A549 (cell line): ENCODE measurements at regions of chr11 and their contacts with region 1.

Region 1: DNA sequence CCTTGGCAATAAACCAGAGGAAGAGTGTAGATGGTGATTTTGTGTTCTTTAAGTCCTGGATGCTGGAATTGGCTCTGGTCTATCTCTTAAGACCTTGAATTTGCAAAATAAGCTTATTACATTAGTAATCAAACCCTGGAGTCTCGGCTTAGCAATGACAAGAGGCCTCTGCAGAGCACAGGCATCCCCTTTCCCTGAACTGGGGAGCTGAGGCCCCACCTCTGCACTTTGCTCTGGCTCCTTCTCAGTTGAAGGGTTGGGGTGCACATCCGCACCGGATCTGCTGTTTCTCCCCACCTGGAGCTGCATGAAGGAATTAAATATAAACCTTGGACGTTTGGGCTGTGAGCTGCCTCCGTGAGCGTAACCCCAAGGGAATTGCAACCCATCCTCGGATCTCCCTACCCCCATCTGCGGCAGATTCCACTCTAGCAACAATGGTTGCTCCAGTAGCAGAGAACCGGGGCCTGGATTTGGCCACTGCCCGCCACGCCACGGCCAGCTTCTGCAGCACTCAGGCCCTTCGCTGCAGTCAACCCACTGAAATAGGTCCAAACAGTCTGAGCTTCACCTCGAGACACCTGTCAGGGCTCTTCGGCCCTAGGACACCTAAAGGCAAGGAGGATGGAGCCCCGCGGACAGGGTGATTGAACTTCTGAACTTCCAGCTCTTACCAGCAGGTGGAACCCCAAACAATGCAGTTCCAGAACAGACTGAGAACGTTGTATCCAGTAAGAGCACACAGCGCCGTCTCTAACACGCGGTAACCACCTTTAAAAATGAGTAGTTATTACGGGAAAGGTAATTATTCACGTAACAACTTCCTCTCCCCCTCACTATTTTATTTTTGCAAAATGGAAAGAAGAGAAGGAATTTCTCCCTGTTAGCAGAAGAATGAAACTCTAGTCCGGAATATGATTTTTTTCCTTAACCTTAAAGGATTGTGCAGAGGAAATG is 54.8 kb upstream of the CAPRIN1 start:
- DNase-seq: peak; percentile 64 to 79
- ATAC-seq: peak; percentile 99 to 100
- H3K4me3 ChIP-seq: peak overlapping the region; percentile 23; the same call in 2 of the 3 replicates
- H3K27ac ChIP-seq: no peak overlapping the region
- H3K4me1 ChIP-seq: peaks cover 14% of the 10 kb centered on the region
- CTCF ChIP-seq: peak; percentile 87
- EP300 ChIP-seq: no peak
- POLR2A ChIP-seq: no peak
- RAD21 ChIP-seq: peak; percentile 82

Region 2: DNA sequence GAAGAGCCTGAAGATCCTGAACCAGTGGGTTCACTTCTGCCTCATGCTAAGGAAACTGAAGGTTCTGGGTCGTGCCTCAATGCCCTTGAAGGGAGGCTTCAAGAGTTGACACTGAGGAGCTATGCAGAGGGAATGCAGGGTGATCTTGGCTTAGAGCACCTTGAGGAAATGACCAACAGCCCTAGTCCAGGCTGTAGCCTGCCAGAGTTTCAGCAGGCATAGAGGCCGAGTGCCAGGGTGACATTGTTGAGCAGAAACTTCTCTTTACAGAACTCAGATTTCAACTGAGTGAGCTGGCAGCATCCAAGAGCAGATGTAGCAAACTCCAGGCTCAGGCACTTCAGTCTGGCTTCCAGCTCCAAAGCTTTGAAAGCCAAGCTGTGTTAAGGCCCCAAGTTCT is 31.6 kb after region 1 on chr11:
- CTCF ChIA-PET with region 1: interaction called, 15 read pairs
- POLR2A ChIA-PET with region 1: no interaction called
- DNase-seq: no peak
- ATAC-seq: peak in 1 of 2 experiments; percentile 48; a peak in 4 of 6 replicates
- H3K4me3 ChIP-seq: no peak overlapping the region
- H3K27ac ChIP-seq: peak overlapping the region in 1 of 2 experiments; percentile 63; a peak in 3 of 6 replicates
- H3K4me1 ChIP-seq: peaks cover 14% of the 10 kb centered on the region
- CTCF ChIP-seq: no peak
- EP300 ChIP-seq: no peak
- POLR2A ChIP-seq: no peak
- RAD21 ChIP-seq: no peak

Region 3: DNA sequence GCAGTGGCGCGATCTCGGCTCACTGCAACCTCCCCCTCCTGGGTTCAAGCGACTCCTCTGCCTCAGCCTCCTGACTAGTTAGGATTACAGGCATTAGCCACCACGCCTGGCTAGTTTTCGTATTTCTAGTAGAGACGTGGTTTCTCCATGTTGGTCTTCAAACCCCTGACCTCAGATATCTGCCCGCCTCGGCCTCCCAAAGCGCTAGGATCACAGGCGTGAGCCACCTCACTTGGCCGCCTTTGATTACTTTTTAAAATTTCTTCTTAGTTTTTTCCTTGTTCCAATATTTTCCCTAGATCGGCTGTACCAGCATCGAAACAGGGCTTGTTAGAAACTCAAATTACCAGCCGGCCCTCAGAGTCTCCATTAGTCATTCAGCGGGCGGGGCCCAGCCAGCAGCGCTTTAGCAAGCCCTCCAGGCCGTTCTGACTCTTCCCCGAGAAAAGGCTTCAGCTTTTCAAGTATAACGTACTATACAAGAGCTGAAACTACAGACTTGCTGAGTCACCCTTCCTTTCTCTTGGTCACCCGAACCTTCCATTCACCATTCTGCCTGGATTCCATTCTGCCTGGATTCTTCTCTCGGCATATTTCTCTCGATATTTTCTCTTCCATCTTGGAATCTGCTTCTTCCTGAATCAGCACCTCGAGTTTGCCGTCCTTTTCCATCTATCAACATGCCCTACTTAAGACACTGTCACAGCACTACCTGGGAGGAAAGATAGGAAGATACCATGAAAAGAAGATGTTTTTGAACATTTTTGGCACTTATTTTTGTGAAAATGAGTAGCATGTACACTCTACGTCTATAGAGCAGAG is 48.1 kb after region 1 on chr11:
- CTCF ChIA-PET with region 1: interaction called, 16 read pairs
- POLR2A ChIA-PET with region 1: no interaction called
- DNase-seq: peak; percentile 51 to 76
- ATAC-seq: peak; percentile 81 to 97
- H3K4me3 ChIP-seq: peak overlapping the region; percentile 7; the same call in 1 of the 3 replicates
- H3K27ac ChIP-seq: peak overlapping the region; percentile 80 to 88
- H3K4me1 ChIP-seq: peaks cover 12% of the 10 kb centered on the region
- CTCF ChIP-seq: no peak
- EP300 ChIP-seq: no peak
- POLR2A ChIP-seq: no peak
- RAD21 ChIP-seq: no peak

Region 4: DNA sequence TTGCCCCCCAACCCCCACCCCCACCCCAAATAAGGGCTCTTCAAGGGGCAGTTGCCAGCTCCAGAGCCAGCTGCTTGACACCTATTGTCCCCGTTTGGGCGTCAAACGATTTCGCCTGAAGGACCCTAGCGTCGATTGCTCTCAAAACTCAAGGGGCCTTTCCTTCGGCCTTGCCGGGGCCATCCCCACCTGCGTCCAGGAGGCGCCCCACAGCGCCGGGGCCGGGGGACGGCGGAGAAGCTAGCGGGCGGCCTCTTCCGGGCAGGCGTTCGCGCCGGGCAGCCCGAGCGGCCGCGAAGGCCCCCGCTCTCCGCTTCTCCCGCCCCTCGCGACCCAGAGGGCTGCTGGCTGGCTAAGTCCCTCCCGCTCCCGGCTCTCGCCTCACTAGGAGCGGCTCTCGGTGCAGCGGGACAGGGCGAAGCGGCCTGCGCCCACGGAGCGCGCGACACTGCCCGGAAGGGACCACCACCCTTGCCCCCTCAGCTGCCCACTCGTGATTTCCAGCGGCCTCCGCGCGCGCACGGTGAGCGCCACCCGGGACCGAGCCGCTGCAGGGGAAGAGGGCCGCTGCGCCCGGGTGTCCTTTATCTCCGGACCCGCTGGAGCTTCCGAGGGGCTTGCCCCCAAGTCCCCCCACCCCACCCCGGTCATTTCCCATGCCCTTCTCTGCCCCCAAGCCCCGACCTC is 54.7 kb after region 1 on chr11 and contains the start of gene CAPRIN1:
- CTCF ChIA-PET with region 1: interaction called, 16 read pairs
- POLR2A ChIA-PET with region 1: no interaction called
- DNase-seq: peak; percentile 89 to 94
- ATAC-seq: peak; percentile 81 to 91
- H3K4me3 ChIP-seq: peak within 1 kb of the TSS; percentile 91
- H3K27ac ChIP-seq: peak within 1 kb of the TSS; percentile 98 to 100
- H3K4me1 ChIP-seq: peaks cover 32% of the 10 kb centered on the region
- CTCF ChIP-seq: no peak
- EP300 ChIP-seq: peak in 1 of 2 experiments; percentile 36; a peak in 1 of 5 replicates
- POLR2A ChIP-seq: peak; percentile 75
- RAD21 ChIP-seq: no peak
- polyA plus RNA-seq, gene CAPRIN1: 224 and 255 TPM in 2 replicates

Region 5: GRCh38 chr11:34075178-34075820 is 78.5 kb after region 1 on chr11:
- CTCF ChIA-PET with region 1: interaction called, 11 read pairs
- POLR2A ChIA-PET with region 1: no interaction called
- DNase-seq: no peak
- ATAC-seq: no peak
- H3K4me3 ChIP-seq: no peak overlapping the region
- H3K27ac ChIP-seq: no peak overlapping the region
- H3K4me1 ChIP-seq: peaks cover 5% of the 10 kb centered on the region; the same call in 2 of the 3 replicates
- CTCF ChIP-seq: no peak
- EP300 ChIP-seq: no peak
- POLR2A ChIP-seq: no peak
- RAD21 ChIP-seq: no peak

Region 6: GRCh38 chr11:34105079-34105956 is 108.5 kb after region 1 on chr11 and contains the start of gene NAT10:
- CTCF ChIA-PET with region 1: interaction called, 13 read pairs
- POLR2A ChIA-PET with region 1: interaction called, 4 read pairs
- DNase-seq: peak; percentile 95 to 99
- ATAC-seq: peak; percentile 93
- H3K4me3 ChIP-seq: peak within 1 kb of the TSS; percentile 92
- H3K27ac ChIP-seq: peak within 1 kb of the TSS; percentile 84 to 95
- H3K4me1 ChIP-seq: peaks cover 13% of the 10 kb centered on the region; the same call in 2 of the 3 replicates
- CTCF ChIP-seq: no peak
- EP300 ChIP-seq: 0 out of 5 replicates have a peak, but pooled peaks of 1 of the 2 experiments have one; percentile 14
- POLR2A ChIP-seq: peak; percentile 87
- RAD21 ChIP-seq: 0 out of 5 replicates have a peak, but pooled peaks of 1 of the 2 experiments have one; percentile 5
- polyA plus RNA-seq, gene NAT10: 57.1 and 59.3 TPM in 2 replicates

Region 7: DNA sequence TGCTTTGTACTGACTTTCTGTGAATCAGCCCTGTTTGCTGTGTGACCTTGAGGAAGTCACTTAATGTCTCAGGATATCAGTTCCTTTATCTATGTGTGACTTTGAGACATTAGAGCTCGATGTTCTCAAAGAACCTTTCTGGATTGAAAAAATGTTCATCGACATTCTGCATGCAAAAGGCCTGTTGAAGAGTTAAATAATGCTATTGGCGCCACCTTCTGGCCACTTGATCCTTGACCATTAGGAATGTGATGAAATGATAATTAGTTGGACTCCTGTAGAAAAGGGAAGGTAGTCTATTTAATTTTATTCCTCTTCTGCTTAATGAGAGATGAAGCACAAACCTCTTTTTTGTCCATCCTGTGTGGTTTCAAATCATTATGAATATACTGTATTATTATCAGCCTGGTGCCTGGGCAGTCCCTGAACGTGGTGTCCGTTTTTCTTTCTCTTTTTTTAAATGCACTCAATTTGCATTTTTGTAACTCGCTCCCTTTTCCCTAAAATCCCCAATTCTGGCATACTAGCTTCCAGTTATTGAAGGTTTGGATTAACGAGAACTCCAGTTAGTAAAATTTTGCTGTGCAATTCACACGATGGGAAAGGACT is 496.1 kb after region 1 on chr11:
- CTCF ChIA-PET with region 1: interaction called, 18 read pairs
- POLR2A ChIA-PET with region 1: no interaction called
- DNase-seq: peak; percentile 66 to 75
- ATAC-seq: peak; percentile 51 to 81; a peak in 3 of 6 replicates
- H3K4me3 ChIP-seq: no peak overlapping the region
- H3K27ac ChIP-seq: peak overlapping the region in 1 of 2 experiments; percentile 47; a peak in 3 of 6 replicates
- H3K4me1 ChIP-seq: no peaks in the 10 kb centered on the region
- CTCF ChIP-seq: peak; percentile 90
- EP300 ChIP-seq: no peak
- POLR2A ChIP-seq: no peak
- RAD21 ChIP-seq: peak; percentile 90